ENCODE measurements at regions of chr1 and their contacts with region 1.

Region 1: GRCh38 chr1:97849345-97850340 is 71.2 kb downstream of the DPYD start:
- DNase-seq: no peak
- ATAC-seq: peak in 3 of 4 donors; percentile 52 to 91 (median 52)
- H3K4me3 ChIP-seq: peak overlapping the region in 1 of 12 donors; percentile 4
- H3K27ac ChIP-seq: peak overlapping the region in 2 of 12 donors; percentile 33 to 75
- H3K4me1 ChIP-seq: peaks cover 0 to 35% (median 9%) of the 10 kb centered on the region in 12 donors
- H3K27me3 ChIP-seq: no peaks in the 10 kb centered on the region
- CTCF ChIP-seq: no peak
- POLR2A ChIP-seq: no peak

Region 2: DNA sequence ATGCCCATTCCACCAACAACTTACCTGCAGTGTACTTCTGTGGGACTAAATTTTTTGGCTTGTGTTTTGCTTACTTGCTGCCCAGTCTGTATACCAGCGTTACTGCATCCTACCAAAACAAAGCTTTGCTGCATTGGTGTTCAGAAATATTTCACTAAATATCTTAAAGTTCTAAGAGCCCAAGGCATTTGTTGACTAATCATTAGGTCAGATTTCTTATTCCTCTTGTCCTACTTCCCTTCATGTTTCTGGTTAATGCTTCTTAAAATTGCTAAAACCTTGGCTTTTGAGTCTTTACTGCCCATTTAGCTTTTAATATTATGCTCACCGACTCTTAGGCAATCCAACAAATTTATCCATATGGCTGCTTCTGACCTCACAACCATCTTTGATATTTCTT is 90.6 kb before region 1 on chr1:
- intact Hi-C with region 1: no loop called
- DNase-seq: no peak
- ATAC-seq: no peak
- H3K4me3 ChIP-seq: no peak overlapping the region
- H3K27ac ChIP-seq: peak overlapping the region in 1 of 12 donors; percentile 12
- H3K4me1 ChIP-seq: peaks cover 0 to 22% (median 19%) of the 10 kb centered on the region in 12 donors
- H3K27me3 ChIP-seq: no peaks in the 10 kb centered on the region
- CTCF ChIP-seq: no peak
- POLR2A ChIP-seq: no peak

Region 3: GRCh38 chr1:97791251-97791650 is 58.4 kb before region 1 on chr1:
- intact Hi-C with region 1: no loop called
- DNase-seq: no peak
- ATAC-seq: no peak
- H3K4me3 ChIP-seq: no peak overlapping the region
- H3K27ac ChIP-seq: no peak overlapping the region
- H3K4me1 ChIP-seq: peaks cover 0 to 11% (median 0%) of the 10 kb centered on the region in 12 donors
- H3K27me3 ChIP-seq: no peaks in the 10 kb centered on the region
- CTCF ChIP-seq: no peak
- POLR2A ChIP-seq: no peak

Region 4: GRCh38 chr1:97920832-97921571 is 71.4 kb after region 1 on chr1 and contains the start of gene DPYD:
- intact Hi-C with region 1: loop called in 1 of 10 experiments (anchors 5 kb)
- DNase-seq: peak; percentile 89 to 95 (median 93)
- ATAC-seq: peak; percentile 84 to 100 (median 98)
- H3K4me3 ChIP-seq: peak within 1 kb of the TSS; percentile 80 to 99 (median 88)
- H3K27ac ChIP-seq: peak within 1 kb of the TSS; percentile 86 to 95 (median 93)
- H3K4me1 ChIP-seq: peaks cover 0 to 38% (median 16%) of the 10 kb centered on the region in 12 donors
- H3K27me3 ChIP-seq: no peaks in the 10 kb centered on the region
- CTCF ChIP-seq: no peak
- POLR2A ChIP-seq: peak in 1 of 2 donors; percentile 89
- total RNA-seq, gene DPYD: 7.1 to 38.4 (median 8.0) TPM